Right ventricle myocardium inferior (tissue), 1 donor: ENCODE measurements at regions of chr5 and their contacts with region 1.

Region 1: GRCh38 chr5:40904205-40904993 is 4.9 kb upstream of the C7 start:
- DNase-seq: no peak
- ATAC-seq: peak; percentile 93

Region 2: DNA sequence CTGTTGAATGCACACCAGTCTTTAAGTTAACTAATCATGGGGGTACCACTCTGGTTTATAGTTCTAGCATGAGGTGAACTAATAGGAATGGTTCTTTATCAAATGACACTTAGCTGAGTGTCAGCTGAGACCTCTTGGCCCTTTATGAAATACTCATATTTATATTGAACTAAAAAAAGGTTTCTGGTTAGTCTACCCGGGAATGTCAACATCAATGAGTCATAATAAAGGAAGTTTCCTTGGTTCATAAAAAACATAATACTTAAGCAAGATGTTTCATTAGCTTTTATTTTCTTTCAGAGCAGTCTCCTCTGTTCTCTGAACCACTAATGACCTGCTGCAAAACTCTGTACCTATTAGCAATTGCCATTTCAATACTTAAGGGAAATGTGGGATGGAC is 1493.3 kb before region 1 on chr5:
- intact Hi-C with region 1: loop called (anchors 5 kb)
- DNase-seq: no peak
- ATAC-seq: peak; percentile 39

Region 3: GRCh38 chr5:40879163-40879942 is 25.0 kb before region 1 on chr5:
- intact Hi-C with region 1: no loop called
- DNase-seq: no peak
- ATAC-seq: no peak

Region 4: GRCh38 chr5:41334758-41335157 is 430.4 kb after region 1 on chr5:
- intact Hi-C with region 1: loop called (anchors 5 kb)
- DNase-seq: peak; percentile 68
- ATAC-seq: peak; percentile 86

Region 5: DNA sequence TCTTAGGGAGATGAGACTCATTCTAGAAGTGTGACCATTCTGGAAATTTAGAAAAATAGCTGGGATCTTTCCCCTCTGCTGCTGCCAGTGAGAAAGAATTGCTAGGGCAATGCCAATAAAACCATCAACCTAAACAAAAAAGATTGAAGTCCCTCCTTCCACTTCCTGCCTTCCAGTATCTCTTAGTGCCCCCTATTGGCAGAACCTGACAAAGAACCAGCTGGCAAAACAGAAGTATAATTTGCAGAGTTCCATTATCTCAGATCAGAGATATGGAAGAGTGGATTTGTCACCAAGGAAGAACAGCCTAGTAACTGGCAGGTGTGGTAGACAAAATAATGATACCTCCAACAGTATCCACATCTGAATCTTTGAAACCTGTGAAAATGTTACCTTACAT is 619.8 kb after region 1 on chr5:
- intact Hi-C with region 1: loop called (anchors 10 kb)
- DNase-seq: no peak
- ATAC-seq: no peak

Region 6: GRCh38 chr5:41641621-41642020 is 737.2 kb after region 1 on chr5:
- intact Hi-C with region 1: loop called (anchors 1 kb)
- DNase-seq: no peak
- ATAC-seq: no peak